ENCODE measurements at regions of chr13 and their contacts with region 1.

Region 1: DNA sequence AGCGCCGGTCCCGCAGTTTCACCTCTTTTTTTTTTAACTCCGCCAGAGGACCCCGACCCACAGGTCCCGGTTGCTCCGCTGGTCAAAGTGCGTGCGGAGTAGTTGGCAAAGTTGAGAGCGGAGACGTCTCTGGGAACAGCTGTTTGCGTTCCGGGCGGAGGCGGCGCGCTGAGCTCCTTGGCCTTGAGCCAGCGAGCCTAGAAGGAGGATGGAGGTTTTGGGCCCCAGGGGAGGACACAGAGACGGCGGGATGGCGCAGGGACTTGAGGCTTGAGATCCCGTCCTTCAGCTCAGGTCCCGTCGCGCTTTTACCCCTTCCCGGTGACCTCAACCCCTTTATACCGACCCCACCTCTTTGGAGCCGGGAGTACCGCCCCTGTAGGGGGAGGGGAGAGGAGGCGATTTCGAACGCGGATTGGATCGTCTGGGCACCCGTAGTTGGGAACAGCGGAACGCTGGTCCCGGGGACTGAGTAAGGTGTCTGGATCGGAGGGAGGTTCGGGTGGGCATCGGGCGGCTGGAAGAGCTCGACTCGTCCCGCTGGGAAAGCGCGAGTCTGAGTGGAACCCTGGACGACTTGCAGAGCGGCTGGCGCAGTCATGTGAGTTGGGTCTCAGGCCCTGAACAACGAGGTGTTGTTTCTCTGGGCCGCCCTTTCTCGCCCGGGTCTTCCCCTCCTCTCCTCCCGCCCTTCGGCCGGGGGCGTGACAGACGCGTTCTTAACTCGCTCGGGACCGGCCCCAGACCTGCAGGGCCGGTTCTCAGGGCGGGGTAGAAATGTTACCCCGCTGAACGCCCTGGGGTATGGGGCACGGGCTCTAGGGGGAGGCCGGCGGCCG is at the start of gene WBP4:
- DNase-seq: peak; percentile 89
- ATAC-seq: peak; percentile 82
- H3K4me3 ChIP-seq: peak within 1 kb of the TSS; percentile 84 to 96 (median 90)
- H3K27ac ChIP-seq: peak within 1 kb of the TSS; percentile 98
- H3K4me1 ChIP-seq: peaks cover 52% of the 10 kb centered on the region
- H3K27me3 ChIP-seq: no peaks in the 10 kb centered on the region; a peak in 1 of 5 replicates
- CTCF ChIP-seq: no peak
- EP300 ChIP-seq: peak; percentile 64 to 76
- POLR2A ChIP-seq: peak; percentile 98
- RAD21 ChIP-seq: 0 out of 2 replicates have a peak, but pooled peaks have one; percentile 32
- total RNA-seq, gene WBP4: 11.7 and 16.8 TPM in 2 replicates

Region 2: DNA sequence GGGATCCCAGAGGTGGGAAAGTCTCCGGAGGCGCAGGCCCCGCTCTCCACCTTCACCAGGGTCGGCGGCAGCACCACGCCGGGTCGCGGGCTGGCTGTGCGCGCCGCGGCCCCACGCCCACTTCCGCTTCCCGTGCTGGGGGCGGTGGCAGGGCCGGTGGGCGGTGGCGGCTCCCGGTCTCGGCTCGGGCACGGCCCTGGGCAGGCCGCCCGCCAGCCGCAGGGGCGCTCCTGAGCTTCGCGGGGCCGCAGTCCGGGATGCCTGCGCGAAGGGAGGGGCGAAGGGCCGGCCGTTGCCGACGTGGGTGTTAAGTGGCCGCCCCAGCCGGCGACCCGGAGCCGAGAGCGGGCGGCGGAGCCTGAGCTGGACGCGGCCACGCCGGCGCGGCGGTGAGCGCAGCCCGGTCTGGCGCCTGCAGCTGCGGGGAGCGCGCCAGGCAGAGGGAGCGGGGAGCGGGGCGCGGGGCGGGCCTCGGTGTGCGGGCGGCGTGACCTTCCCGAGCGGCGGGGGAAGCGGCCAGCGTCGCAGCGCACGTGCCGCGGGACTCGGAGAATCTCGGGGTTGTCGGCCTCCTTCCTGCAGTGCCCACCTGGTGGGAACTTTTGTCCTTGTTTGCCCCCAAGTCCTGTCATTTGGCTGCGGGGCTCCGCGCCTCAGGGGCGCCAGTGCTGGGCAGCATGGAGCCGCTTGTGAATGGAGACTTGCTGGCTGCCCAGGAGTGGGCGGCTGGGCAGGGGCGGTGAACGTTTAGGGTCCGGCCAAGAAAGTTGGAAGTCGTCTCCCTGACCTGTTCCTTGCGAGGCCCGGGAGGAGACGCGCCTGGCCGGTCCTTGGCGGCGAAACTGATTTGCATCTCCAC is 271.8 kb before region 1 on chr13 and contains the start of gene SLC25A15:
- CTCF ChIA-PET with region 1: no interaction called
- POLR2A ChIA-PET with region 1: interaction called, 12 read pairs
- in situ Hi-C with region 1: no loop called
- intact Hi-C with region 1: loop called (anchors 5 kb)
- DNase-seq: peak; percentile 67
- ATAC-seq: peak; percentile 90
- H3K4me3 ChIP-seq: peak within 1 kb of the TSS; percentile 89 to 97 (median 92)
- H3K27ac ChIP-seq: peak within 1 kb of the TSS; percentile 92
- H3K4me1 ChIP-seq: peaks cover 83% of the 10 kb centered on the region
- H3K27me3 ChIP-seq: no peaks in the 10 kb centered on the region; a peak in 1 of 5 replicates
- CTCF ChIP-seq: peak; percentile 71
- EP300 ChIP-seq: no peak; a peak in 1 of 4 replicates
- POLR2A ChIP-seq: peak; percentile 65 to 88; a peak in 3 of 4 replicates
- RAD21 ChIP-seq: peak; percentile 95
- total RNA-seq, gene SLC25A15: 39.1 and 47.6 TPM in 2 replicates

Region 3: GRCh38 chr13:41004875-41005693 is 56.2 kb before region 1 on chr13:
- CTCF ChIA-PET with region 1: no interaction called
- POLR2A ChIA-PET with region 1: interaction called, 12 read pairs
- in situ Hi-C with region 1: no loop called
- intact Hi-C with region 1: loop called (anchors 2 kb)
- DNase-seq: no peak
- ATAC-seq: no peak
- H3K4me3 ChIP-seq: no peak overlapping the region; a peak in 1 of 6 replicates
- H3K27ac ChIP-seq: peak overlapping the region; percentile 45
- H3K4me1 ChIP-seq: peaks cover 98% of the 10 kb centered on the region
- H3K27me3 ChIP-seq: no peaks in the 10 kb centered on the region
- CTCF ChIP-seq: no peak
- EP300 ChIP-seq: peak in 1 of 2 experiments; percentile 7; a peak in 1 of 4 replicates
- POLR2A ChIP-seq: no peak
- RAD21 ChIP-seq: no peak

Region 4: DNA sequence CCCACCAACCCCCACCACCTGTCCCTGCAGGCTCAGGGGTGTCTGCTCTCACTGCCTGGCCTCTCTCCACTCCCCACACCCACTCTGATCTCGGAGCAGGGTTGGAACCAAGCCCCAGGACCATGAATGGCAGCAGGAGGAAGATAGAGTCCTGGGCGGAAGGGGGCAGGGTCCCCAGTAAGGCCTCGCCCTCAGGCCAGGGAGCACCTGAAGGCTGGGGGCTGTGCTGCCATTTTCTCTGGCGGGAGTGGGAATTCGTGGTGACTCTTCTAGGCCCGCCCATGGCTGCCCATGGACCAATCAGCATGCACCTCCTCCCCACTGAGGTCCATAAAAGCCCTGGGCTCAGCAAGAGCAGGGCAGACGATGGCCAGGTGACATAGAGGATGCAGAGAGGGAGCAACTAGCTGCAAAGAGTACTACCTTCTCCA is 46.3 kb after region 1 on chr13:
- CTCF ChIA-PET with region 1: no interaction called
- POLR2A ChIA-PET with region 1: interaction called, 12 read pairs
- in situ Hi-C with region 1: no loop called
- intact Hi-C with region 1: no loop called
- DNase-seq: peak; percentile 81
- ATAC-seq: peak; percentile 95
- H3K4me3 ChIP-seq: peak overlapping the region; percentile 69 to 79 (median 69)
- H3K27ac ChIP-seq: peak overlapping the region; percentile 59
- H3K4me1 ChIP-seq: peaks cover 12% of the 10 kb centered on the region
- H3K27me3 ChIP-seq: no peaks in the 10 kb centered on the region
- CTCF ChIP-seq: 0 out of 2 replicates have a peak, but pooled peaks have one; percentile 3
- EP300 ChIP-seq: no peak
- POLR2A ChIP-seq: peak; percentile 93 to 94
- RAD21 ChIP-seq: no peak; the same call in 1 of the 2 replicates

Region 5: DNA sequence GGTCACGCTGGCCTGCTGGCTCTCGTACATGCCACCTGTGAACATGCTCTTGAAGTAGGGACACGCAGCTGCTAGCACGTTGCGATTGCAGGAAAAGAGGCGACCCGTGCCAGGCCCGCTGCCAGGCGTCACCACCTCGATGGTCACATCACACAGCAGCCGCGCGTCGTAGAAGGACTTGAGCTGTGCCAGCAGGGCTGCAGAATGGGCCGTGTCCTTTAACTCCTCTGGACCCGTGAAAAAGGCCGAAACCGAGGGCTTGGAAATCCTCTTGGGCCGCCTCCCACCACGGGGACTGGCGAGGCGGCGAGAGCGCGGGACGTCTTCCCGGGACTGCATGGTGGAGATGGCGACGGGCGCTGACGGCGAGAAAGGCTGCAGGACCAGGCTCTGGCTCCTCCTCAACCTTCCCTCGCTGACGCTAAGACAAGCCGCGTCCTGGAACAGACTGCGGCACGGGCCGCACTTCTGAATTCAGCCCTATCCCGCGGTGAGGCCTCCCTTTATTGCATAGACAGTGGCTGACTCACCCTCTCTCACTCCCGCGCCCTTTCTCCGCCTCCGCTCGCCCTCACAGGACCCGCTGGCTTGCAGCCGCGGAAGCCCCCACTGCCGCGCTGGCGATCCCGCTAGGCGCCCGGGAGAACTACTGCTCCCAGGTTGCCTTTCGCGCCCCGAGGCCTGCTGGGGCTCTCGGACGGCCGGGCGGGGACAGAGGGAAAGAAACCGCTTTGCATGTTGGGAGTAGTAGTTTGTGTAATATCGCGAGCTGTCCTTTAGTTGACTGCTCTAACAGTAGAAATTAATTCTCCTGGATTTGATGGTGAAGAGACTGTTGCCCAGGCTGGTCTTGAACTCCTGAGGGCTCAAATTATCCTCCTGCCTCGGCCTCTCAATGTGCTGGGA is 132.9 kb after region 1 on chr13 and contains the start of gene KBTBD7:
- CTCF ChIA-PET with region 1: no interaction called
- POLR2A ChIA-PET with region 1: interaction called, 7 read pairs
- in situ Hi-C with region 1: loop called (anchors 10 kb)
- intact Hi-C with region 1: no loop called
- DNase-seq: peak; percentile 91
- ATAC-seq: peak; percentile 98
- H3K4me3 ChIP-seq: peak within 1 kb of the TSS; percentile 57 to 89 (median 75)
- H3K27ac ChIP-seq: peak within 1 kb of the TSS; percentile 85
- H3K4me1 ChIP-seq: peaks cover 57% of the 10 kb centered on the region
- H3K27me3 ChIP-seq: no peaks in the 10 kb centered on the region; a peak in 1 of 5 replicates
- CTCF ChIP-seq: no peak; the same call in none of the 2 replicates
- EP300 ChIP-seq: 0 out of 4 replicates have a peak, but pooled peaks of 1 of the 2 experiments have one; percentile 44
- POLR2A ChIP-seq: peak; percentile 79 to 92
- RAD21 ChIP-seq: peak; percentile 27; the same call in 1 of the 2 replicates
- total RNA-seq, gene KBTBD7: 9.0 and 14.9 TPM in 2 replicates

Measured in HepG2 (cell line).